Dendritic cell treated with granulocyte-macrophage colony-stimulating factor and Interleukin-4, amounts not matched to agents 40 ng/mL and 50 ng/mL, for 4 days (primary cell): ENCODE measurements at regions of chr11 and their contacts with region 1.

Region 1: GRCh38 chr11:45804761-45805304 is at the start of gene SLC35C1:
- H3K4me3 Mint-ChIP-seq: peak within 1 kb of the TSS; percentile 90
- H3K27ac Mint-ChIP-seq: peak within 1 kb of the TSS; percentile 97
- H3K4me1 Mint-ChIP-seq: peaks cover 52% of the 10 kb centered on the region
- H3K27me3 Mint-ChIP-seq: peaks cover 3% of the 10 kb centered on the region

Region 2: GRCh38 chr11:44565211-44565952 is 1239.5 kb before region 1 on chr11 and contains the start of gene CD82:
- intact Hi-C with region 1: loop called (anchors 10 kb)
- H3K4me3 Mint-ChIP-seq: peak within 1 kb of the TSS; percentile 81
- H3K27ac Mint-ChIP-seq: peak within 1 kb of the TSS; percentile 93
- H3K4me1 Mint-ChIP-seq: peaks cover 75% of the 10 kb centered on the region
- H3K27me3 Mint-ChIP-seq: peaks cover 32% of the 10 kb centered on the region

Region 3: DNA sequence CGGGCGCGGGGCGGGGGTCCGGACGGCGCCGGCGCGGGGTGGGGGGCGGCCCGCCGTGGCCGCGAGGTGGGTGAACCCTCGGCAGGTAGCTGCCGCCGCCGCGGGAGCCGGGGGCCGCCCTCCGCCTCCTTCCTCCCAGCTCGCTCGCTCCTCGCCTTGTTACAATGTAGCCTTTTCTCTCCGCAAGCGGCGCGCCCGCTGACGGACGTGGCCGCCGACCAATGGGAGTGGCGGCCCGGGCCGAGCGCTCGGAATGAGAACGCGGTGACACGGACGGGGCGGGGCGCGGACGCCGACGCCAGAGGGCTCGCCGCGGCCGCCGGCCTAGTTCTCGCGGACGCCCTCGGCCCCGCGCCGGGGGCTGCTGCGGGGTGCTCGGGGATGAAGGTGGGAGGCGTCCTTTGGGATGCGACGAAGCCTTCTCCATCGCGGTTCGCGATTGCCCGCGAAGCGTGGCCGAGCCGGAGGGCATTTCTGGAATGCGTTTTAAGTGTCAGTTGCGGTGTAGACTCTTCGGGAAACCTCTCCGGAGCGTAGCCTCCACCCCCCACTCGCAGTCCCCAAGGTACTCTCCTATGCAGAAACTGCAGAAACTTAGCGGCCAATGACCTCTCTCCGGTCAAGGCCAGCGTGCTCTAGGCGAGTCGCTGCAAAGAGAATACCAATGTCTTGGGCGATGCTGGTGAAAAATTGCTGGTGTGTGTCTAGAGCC is 657.7 kb before region 1 on chr11:
- intact Hi-C with region 1: loop called (anchors 5 kb)
- H3K4me3 Mint-ChIP-seq: peak overlapping the region; percentile 84
- H3K27ac Mint-ChIP-seq: peak overlapping the region; percentile 94
- H3K4me1 Mint-ChIP-seq: peaks cover 20% of the 10 kb centered on the region
- H3K27me3 Mint-ChIP-seq: peaks cover 29% of the 10 kb centered on the region

Region 4: DNA sequence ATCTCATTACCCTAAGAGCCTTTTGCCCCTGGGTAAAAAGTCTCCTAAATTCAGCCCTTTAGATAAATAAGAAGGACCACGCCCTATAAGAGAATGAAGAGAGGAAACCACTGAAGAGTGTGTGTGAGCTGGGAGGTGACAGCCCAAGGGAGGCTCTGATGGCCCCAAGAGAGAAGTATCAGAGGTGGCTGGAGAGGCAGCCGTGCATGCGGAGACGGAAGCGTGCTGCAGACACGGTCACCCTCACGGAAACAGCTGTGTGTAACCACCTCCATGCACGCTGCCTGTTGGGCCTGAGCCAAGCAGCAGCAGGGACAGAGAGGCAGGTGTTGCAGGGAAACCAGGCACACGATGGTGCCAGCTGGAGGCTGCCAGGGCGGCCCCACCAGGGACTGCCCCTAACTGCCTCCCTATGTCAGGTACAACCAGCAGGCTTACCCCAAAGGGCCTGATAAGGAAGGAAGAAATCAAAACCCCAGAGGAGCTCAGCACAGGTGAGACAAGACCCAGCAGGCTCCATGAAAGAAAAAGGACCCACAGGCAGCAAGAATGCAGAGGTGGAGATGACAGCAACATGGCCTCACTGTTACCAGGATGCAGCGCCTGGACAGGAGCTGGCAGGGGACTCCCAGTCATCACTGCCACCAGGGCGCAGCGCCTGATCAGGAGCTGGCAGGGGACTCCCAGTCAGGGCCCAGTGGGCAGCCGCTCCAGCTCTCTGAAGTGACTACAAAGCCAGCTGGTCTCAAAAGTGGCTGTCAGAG is 125.4 kb after region 1 on chr11:
- intact Hi-C with region 1: no loop called
- H3K4me3 Mint-ChIP-seq: peak overlapping the region; percentile 22
- H3K27ac Mint-ChIP-seq: peak overlapping the region; percentile 58
- H3K4me1 Mint-ChIP-seq: peaks cover 57% of the 10 kb centered on the region
- H3K27me3 Mint-ChIP-seq: peaks cover 28% of the 10 kb centered on the region